Mammary epithelial cell (primary cell): ENCODE measurements at regions of chr7 and their contacts with region 1.

Region 1: DNA sequence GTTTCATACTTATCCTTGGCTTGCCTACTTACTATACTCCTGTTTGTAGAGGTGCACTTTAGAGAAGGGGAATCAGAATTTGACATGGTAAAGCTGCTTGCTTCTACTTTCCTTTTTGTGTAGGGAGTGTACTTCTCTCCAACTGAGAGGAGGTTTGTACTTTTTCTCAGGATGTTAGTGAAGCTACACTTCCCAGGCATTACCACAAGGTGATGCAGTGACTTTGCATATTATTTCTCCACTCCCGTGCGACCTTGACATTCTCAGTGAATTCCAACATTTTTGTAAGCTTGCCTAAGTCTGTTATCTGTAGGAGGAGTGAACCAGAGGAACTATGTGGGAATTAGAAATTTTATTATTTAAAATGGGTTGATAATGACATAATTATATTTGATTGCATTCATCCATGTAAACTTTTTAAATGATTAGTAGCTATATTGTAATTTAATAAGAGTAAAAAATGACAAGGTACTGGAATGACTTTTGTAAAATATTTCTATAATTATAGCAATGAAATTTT is 5.2 kb downstream of the TAX1BP1 start:
- DNase-seq: peak; percentile 58
- H3K4me3 ChIP-seq: peak overlapping the region in 2 of 3 experiments; percentile 1 to 30
- H3K27ac ChIP-seq: peak overlapping the region; percentile 43
- H3K4me1 ChIP-seq: peaks cover 8% of the 10 kb centered on the region
- H3K27me3 ChIP-seq: no peaks in the 10 kb centered on the region
- CTCF ChIP-seq: peak; percentile 80 to 92

Region 2: GRCh38 chr7:27784393-27785053 is 39.4 kb after region 1 on chr7:
- CTCF ChIA-PET with region 1: no interaction called
- dilution Hi-C with region 1: no loop called
- in situ Hi-C with region 1: no loop called
- intact Hi-C with region 1: loop called (anchors 5 kb)
- DNase-seq: peak; percentile 51
- H3K4me3 ChIP-seq: no peak overlapping the region
- H3K27ac ChIP-seq: no peak overlapping the region
- H3K4me1 ChIP-seq: peaks cover 6% of the 10 kb centered on the region
- H3K27me3 ChIP-seq: no peaks in the 10 kb centered on the region
- CTCF ChIP-seq: peak; percentile 46 to 58

Region 3: GRCh38 chr7:27802999-27803398 is 57.9 kb after region 1 on chr7:
- CTCF ChIA-PET with region 1: no interaction called
- dilution Hi-C with region 1: no loop called
- in situ Hi-C with region 1: no loop called
- intact Hi-C with region 1: no loop called
- DNase-seq: no peak
- H3K4me3 ChIP-seq: no peak overlapping the region
- H3K27ac ChIP-seq: no peak overlapping the region
- H3K4me1 ChIP-seq: no peaks in the 10 kb centered on the region
- H3K27me3 ChIP-seq: no peaks in the 10 kb centered on the region
- CTCF ChIP-seq: no peak

Region 4: GRCh38 chr7:27921081-27921836 is 176.1 kb after region 1 on chr7:
- CTCF ChIA-PET with region 1: no interaction called
- dilution Hi-C with region 1: no loop called
- in situ Hi-C with region 1: no loop called
- intact Hi-C with region 1: loop called (anchors 2 kb)
- DNase-seq: peak; percentile 56
- H3K4me3 ChIP-seq: no peak overlapping the region
- H3K27ac ChIP-seq: no peak overlapping the region
- H3K4me1 ChIP-seq: peaks cover 23% of the 10 kb centered on the region
- H3K27me3 ChIP-seq: no peaks in the 10 kb centered on the region
- CTCF ChIP-seq: peak; percentile 32 to 55